ENCODE measurements at regions of chr17 and their contacts with region 1.

Region 1: DNA sequence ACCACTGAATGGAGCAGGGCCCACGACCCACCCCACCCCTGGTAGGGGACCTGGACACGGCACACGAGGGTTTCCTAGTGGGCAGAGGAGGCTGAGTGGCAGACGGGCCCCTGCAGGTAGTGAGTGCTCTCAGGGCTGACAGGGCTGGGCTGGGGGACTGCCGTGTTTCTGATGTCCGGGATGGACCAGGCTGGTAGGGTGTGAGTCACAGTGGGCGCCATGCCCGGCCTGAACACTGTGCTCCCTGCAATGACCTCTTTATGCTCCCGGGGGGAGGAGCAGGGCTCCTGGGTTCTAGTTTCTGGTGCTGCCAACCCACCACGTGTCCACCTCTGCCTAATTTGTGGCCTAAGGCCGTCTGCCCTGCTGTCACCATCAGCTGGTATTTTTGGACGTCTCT is 26.3 kb downstream of the ARHGAP23 start:
- DNase-seq: no peak
- H3K4me3 ChIP-seq: peak overlapping the region; percentile 78
- H3K27me3 ChIP-seq: no peaks in the 10 kb centered on the region
- CTCF ChIP-seq: no peak

Region 2: GRCh38 chr17:38403491-38403890 is 51.0 kb before region 1 on chr17:
- CTCF ChIA-PET with region 1: no interaction called
- POLR2A ChIA-PET with region 1: no interaction called
- DNase-seq: no peak
- H3K4me3 ChIP-seq: no peak overlapping the region
- H3K27me3 ChIP-seq: no peaks in the 10 kb centered on the region
- CTCF ChIP-seq: no peak

Region 3: DNA sequence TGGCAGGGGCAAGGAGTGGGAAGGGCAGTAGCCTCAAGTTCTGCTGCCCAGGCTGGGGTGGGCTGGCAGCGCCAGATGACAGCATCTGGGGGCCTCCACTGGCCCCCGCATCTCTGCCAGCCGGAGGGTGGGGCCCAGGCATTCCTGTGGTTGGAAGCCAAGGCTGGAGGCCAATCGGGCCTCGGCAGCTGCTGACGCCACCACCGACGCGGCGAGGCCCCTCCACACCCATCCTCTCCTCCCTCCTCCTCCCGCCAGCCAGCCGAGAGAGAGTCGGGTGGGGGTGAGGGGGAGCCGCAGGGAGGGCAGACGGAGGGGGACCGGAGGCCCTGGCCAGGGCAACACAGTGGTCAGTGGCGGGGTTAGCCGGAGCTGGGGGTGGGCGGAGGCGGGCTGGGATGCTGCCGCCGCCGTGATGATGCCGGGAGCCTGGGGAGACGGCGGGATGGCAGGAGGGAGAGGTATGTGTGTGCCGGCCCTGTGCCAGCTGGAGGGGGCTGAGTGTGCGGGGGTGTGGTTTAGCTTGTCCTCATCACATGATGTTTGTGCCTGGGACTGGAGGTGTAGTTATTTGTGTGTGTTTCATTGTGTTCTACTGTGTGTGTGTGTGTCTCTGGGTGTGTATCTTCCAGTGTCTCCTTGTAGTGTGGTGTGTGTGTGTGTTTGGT is 10.3 kb after region 1 on chr17:
- CTCF ChIA-PET with region 1: interaction called, 17 read pairs
- POLR2A ChIA-PET with region 1: interaction called, 15 read pairs
- DNase-seq: peak; percentile 77
- H3K4me3 ChIP-seq: peak overlapping the region; percentile 45
- H3K27me3 ChIP-seq: no peaks in the 10 kb centered on the region
- CTCF ChIP-seq: no peak

Measured in BJ (cell line).